T-cell (primary cell): ENCODE measurements at regions of chr10 and their contacts with region 1.

Region 1: GRCh38 chr10:124626759-124627380 is 117.3 kb downstream of the FAM53B start:
- DNase-seq: peak in 22 of 35 experiments; percentile 25 to 67 (median 36)
- ATAC-seq: peak; percentile 86 to 89 (median 88)
- H3K4me3 ChIP-seq: no peak overlapping the region
- H3K4me3 Mint-ChIP-seq: peak overlapping the region; percentile 17 to 59 (median 31)
- H3K27ac ChIP-seq: peak overlapping the region; percentile 64
- H3K27ac Mint-ChIP-seq: peak overlapping the region; percentile 91
- H3K4me1 ChIP-seq: peaks cover 20 to 87% of the 10 kb centered on the region in 2 experiments
- H3K4me1 Mint-ChIP-seq: peaks cover 51 to 75% (median 57%) of the 10 kb centered on the region in 3 donors
- H3K27me3 ChIP-seq: no peaks in the 10 kb centered on the region
- H3K27me3 Mint-ChIP-seq: no peaks in the 10 kb centered on the region

Region 2: GRCh38 chr10:124450012-124450781 is 176.7 kb before region 1 on chr10 and contains the start of gene NKX1-2:
- CTCF ChIA-PET with region 1: no interaction called
- POLR2A ChIA-PET with region 1: no interaction called
- DNase-seq: peak in 1 of 35 experiments; percentile 5
- ATAC-seq: peak in 1 of 4 experiments; percentile 31
- H3K4me3 ChIP-seq: peak within 1 kb of the TSS in 1 of 2 donors; percentile 5
- H3K4me3 Mint-ChIP-seq: peak within 1 kb of the TSS; percentile 29 to 74 (median 37)
- H3K27ac ChIP-seq: no peak within 1 kb of the TSS
- H3K27ac Mint-ChIP-seq: no peak within 1 kb of the TSS
- H3K4me1 ChIP-seq: peaks cover 0 to 23% of the 10 kb centered on the region in 2 experiments
- H3K4me1 Mint-ChIP-seq: peaks cover 25 to 27% (median 25%) of the 10 kb centered on the region in 3 donors
- H3K27me3 ChIP-seq: peaks cover 37 to 72% of the 10 kb centered on the region in 2 experiments
- H3K27me3 Mint-ChIP-seq: peaks cover 72 to 83% of the 10 kb centered on the region in 2 donors
- total RNA-seq, gene NKX1-2: 0.12 TPM in 1 of 5 donors, not detected in the others

Region 3: DNA sequence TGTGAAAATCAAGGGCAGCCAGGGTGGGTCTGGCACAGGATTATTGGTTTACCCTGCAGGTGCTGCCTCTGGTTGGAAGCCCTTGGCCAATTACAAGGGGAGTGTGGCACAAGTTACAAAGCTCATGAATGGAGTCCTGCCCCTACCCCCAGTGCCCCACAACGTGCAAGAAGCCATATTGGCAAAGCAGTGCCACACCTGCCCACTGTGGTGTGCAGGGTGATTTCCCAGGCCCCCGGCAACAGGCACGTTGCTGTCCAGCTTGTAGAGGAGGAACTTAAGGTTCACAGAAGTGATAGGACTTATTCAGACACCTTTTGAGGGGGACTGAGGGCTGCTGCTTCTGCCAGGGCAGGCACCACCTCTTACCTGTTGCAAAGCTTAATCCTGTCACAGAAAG is 153.8 kb before region 1 on chr10:
- CTCF ChIA-PET with region 1: interaction called in 1 of 2 experiments, 10 read pairs
- POLR2A ChIA-PET with region 1: no interaction called
- DNase-seq: no peak
- ATAC-seq: no peak
- H3K4me3 ChIP-seq: no peak overlapping the region
- H3K4me3 Mint-ChIP-seq: no peak overlapping the region
- H3K27ac ChIP-seq: no peak overlapping the region
- H3K27ac Mint-ChIP-seq: no peak overlapping the region
- H3K4me1 ChIP-seq: no peaks in the 10 kb centered on the region
- H3K4me1 Mint-ChIP-seq: peaks cover 3 to 7% (median 4%) of the 10 kb centered on the region in 3 donors
- H3K27me3 ChIP-seq: no peaks in the 10 kb centered on the region
- H3K27me3 Mint-ChIP-seq: no peaks in the 10 kb centered on the region